GM12878 (cell line): ENCODE measurements at regions of chrX and their contacts with region 1.

Region 1: DNA sequence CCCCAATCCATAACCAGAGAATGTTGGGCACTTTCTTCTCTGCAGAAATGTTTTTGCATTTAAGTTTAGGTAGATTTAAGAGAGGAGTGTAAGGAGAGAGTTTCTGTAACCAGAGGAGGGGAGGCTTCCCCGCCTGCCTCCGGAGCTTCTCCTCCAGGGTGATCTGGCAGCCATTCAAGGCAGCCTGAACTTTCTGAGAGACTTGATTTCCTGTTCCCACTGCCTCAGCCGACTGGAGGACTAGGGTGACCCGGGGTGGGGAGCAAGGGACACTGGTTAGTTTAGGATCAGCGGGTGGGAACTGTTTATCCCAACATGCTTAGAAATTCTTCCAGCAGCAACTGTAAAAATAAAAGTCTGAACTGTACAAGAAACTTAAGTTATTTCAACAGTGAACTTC is 15.1 kb downstream of the FAM9C start:
- DNase-seq: no peak
- ATAC-seq: peak; percentile 21
- H3K4me3 ChIP-seq: no peak overlapping the region
- H3K27ac ChIP-seq: peak overlapping the region; percentile 83
- H3K4me1 ChIP-seq: peaks cover 45% of the 10 kb centered on the region
- H3K27me3 ChIP-seq: no peaks in the 10 kb centered on the region
- CTCF ChIP-seq: no peak
- EP300 ChIP-seq: no peak
- POLR2A ChIP-seq: no peak
- RAD21 ChIP-seq: no peak

Region 2: GRCh38 chrX:12480956-12481355 is 548.4 kb before region 1 on chrX:
- CTCF ChIA-PET with region 1: no interaction called
- POLR2A ChIA-PET with region 1: no interaction called
- RAD21 ChIA-PET with region 1: no interaction called
- SMC1A ChIA-PET with region 1: no interaction called
- in situ Hi-C with region 1: no loop called
- intact Hi-C with region 1: no loop called
- DNase-seq: no peak
- ATAC-seq: no peak
- H3K4me3 ChIP-seq: no peak overlapping the region
- H3K27ac ChIP-seq: no peak overlapping the region
- H3K4me1 ChIP-seq: no peaks in the 10 kb centered on the region
- H3K27me3 ChIP-seq: no peaks in the 10 kb centered on the region
- CTCF ChIP-seq: no peak
- EP300 ChIP-seq: no peak
- POLR2A ChIP-seq: no peak
- RAD21 ChIP-seq: no peak

Region 3: DNA sequence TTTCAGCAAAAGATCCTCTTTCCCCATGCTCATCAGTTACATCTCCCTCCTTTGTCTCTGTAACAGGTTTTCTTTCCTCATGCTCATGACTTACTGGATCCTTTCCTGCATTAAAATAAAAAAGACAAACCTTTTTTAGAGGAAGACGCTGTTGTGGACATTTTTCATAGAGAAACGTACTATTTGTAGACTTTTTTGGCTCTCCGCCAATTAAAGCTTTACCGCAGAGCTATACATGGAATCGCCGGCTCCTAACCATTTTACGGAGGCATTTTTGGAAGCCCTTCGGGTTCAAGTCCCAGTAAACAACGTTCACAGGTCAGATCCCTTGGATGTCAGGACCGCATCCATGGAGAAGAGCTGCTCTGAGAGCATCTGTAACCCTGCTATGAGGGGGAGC is 13.8 kb after region 1 on chrX:
- CTCF ChIA-PET with region 1: interaction called, 3 read pairs
- POLR2A ChIA-PET with region 1: interaction called, 4 read pairs
- RAD21 ChIA-PET with region 1: interaction called, 3 read pairs
- SMC1A ChIA-PET with region 1: interaction called, 166 read pairs
- in situ Hi-C with region 1: no loop called
- intact Hi-C with region 1: no loop called
- DNase-seq: no peak
- ATAC-seq: no peak
- H3K4me3 ChIP-seq: no peak overlapping the region
- H3K27ac ChIP-seq: no peak overlapping the region
- H3K4me1 ChIP-seq: peaks cover 12% of the 10 kb centered on the region
- H3K27me3 ChIP-seq: no peaks in the 10 kb centered on the region
- CTCF ChIP-seq: no peak
- EP300 ChIP-seq: no peak
- POLR2A ChIP-seq: no peak
- RAD21 ChIP-seq: no peak

Region 4: GRCh38 chrX:13764765-13765164 is 735.4 kb after region 1 on chrX:
- CTCF ChIA-PET with region 1: no interaction called
- POLR2A ChIA-PET with region 1: no interaction called
- RAD21 ChIA-PET with region 1: no interaction called
- SMC1A ChIA-PET with region 1: no interaction called
- in situ Hi-C with region 1: no loop called
- intact Hi-C with region 1: no loop called
- DNase-seq: no peak
- ATAC-seq: no peak
- H3K4me3 ChIP-seq: no peak overlapping the region
- H3K27ac ChIP-seq: no peak overlapping the region
- H3K4me1 ChIP-seq: peaks cover 14% of the 10 kb centered on the region
- H3K27me3 ChIP-seq: no peaks in the 10 kb centered on the region
- CTCF ChIP-seq: no peak
- EP300 ChIP-seq: no peak
- POLR2A ChIP-seq: no peak
- RAD21 ChIP-seq: no peak